MCF 10A (cell line): ENCODE measurements at regions of chr11 and their contacts with region 1.

Region 1: GRCh38 chr11:34417202-34417601 is 21.5 kb upstream of the CAT start:
- DNase-seq: no peak
- H3K4me3 Mint-ChIP-seq: no peak overlapping the region
- H3K27ac Mint-ChIP-seq: no peak overlapping the region
- H3K4me1 Mint-ChIP-seq: peaks cover 6% of the 10 kb centered on the region
- H3K27me3 Mint-ChIP-seq: no peaks in the 10 kb centered on the region
- CTCF ChIP-seq: peak; percentile 13

Region 2: DNA sequence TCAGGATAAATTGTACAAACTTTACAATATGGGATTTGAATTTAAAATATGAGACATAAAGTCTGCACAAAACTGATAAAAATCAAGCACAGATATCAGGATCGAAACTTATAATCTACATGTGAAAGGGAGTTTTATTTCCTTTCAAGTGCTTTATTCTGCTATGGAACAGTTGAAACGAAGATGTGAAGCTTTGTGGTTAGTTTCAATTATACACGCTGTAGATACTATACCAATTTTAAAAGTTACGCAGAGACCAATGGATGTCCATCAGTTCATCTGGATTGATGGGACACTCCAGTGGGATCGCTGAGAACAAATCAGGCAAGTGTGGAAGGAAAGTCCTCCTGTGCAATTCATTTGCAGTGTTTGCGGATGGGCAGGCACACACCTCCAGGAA is 12.9 kb before region 1 on chr11:
- CTCF ChIA-PET with region 1: no interaction called
- POLR2A ChIA-PET with region 1: interaction called, 14 read pairs
- intact Hi-C with region 1: no loop called
- DNase-seq: no peak
- H3K4me3 Mint-ChIP-seq: no peak overlapping the region
- H3K27ac Mint-ChIP-seq: no peak overlapping the region
- H3K4me1 Mint-ChIP-seq: peaks cover 7% of the 10 kb centered on the region
- H3K27me3 Mint-ChIP-seq: peaks cover 13% of the 10 kb centered on the region
- CTCF ChIP-seq: no peak

Region 3: GRCh38 chr11:34492806-34493414 is 75.7 kb after region 1 on chr11:
- CTCF ChIA-PET with region 1: no interaction called
- POLR2A ChIA-PET with region 1: no interaction called
- intact Hi-C with region 1: no loop called
- DNase-seq: peak; percentile 76
- H3K4me3 Mint-ChIP-seq: no peak overlapping the region
- H3K27ac Mint-ChIP-seq: no peak overlapping the region
- H3K4me1 Mint-ChIP-seq: no peaks in the 10 kb centered on the region
- H3K27me3 Mint-ChIP-seq: no peaks in the 10 kb centered on the region
- CTCF ChIP-seq: peak; percentile 56